ENCODE measurements at regions of chr12 and their contacts with region 1.

Region 1: GRCh38 chr12:47715393-47715876 is 9.6 kb upstream of the RPAP3 start:
- DNase-seq: peak; percentile 83 to 87
- H3K4me3 ChIP-seq: peak overlapping the region in 1 of 2 donors; percentile 20
- H3K27ac ChIP-seq: peak overlapping the region; percentile 86 to 93
- H3K4me1 ChIP-seq: peaks cover 3 to 5% of the 10 kb centered on the region in 2 donors
- H3K27me3 ChIP-seq: no peaks in the 10 kb centered on the region
- CTCF ChIP-seq: peak; percentile 69 to 91 (median 80)
- POLR2A ChIP-seq: no peak

Region 2: DNA sequence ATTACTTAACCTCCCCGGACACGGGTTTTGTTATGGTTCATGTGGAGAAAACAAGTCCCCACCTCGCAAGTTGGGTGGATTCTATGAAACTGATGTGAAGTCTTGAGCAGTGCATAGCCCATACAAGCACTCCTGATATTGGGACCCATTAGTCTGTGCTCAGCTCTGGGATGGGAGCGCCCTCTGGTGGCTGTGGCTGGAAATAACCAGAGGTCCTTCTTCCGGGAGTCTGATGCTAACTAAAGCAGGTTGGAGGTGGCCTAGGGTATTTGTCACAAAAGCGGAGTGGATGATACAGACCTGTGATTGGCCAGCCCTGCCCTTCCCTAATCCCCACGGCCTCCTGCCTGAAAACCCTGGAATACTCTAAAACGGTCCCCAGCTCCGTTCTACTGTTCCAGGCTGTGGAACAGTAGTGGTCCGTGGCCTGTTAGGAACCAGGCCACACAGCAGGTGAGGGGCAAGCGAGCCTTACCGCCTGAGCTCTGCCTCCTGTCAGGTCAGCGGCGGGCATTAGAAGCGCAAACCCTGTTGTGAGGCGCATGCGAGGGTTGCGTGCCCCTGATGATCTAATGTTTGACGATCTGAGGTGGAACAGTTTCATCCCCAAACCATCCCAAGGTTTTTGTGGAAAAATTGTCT is 64.0 kb after region 1 on chr12:
- intact Hi-C with region 1: loop called (anchors 5 kb)
- DNase-seq: peak; percentile 91
- H3K4me3 ChIP-seq: no peak overlapping the region
- H3K27ac ChIP-seq: peak overlapping the region in 1 of 2 donors; percentile 34
- H3K4me1 ChIP-seq: peaks cover 0 to 5% of the 10 kb centered on the region in 2 donors
- H3K27me3 ChIP-seq: no peaks in the 10 kb centered on the region
- CTCF ChIP-seq: peak; percentile 94 to 96 (median 94)
- POLR2A ChIP-seq: no peak

Measured in uterus (tissue), 4 donors.